Mammary epithelial cell (primary cell): ENCODE measurements at regions of chr17 and their contacts with region 1.

Region 1: GRCh38 chr17:65785109-65785508 is 223.7 kb upstream of the AXIN2 start:
- DNase-seq: peak; percentile 79
- H3K4me3 ChIP-seq: no peak overlapping the region
- H3K27ac ChIP-seq: peak overlapping the region; percentile 4
- H3K4me1 ChIP-seq: peaks cover 22% of the 10 kb centered on the region
- H3K27me3 ChIP-seq: no peaks in the 10 kb centered on the region
- CTCF ChIP-seq: no peak

Region 2: GRCh38 chr17:65561394-65562205 is 223.5 kb before region 1 on chr17 and contains the start of gene AXIN2:
- CTCF ChIA-PET with region 1: no interaction called
- dilution Hi-C with region 1: no loop called
- in situ Hi-C with region 1: no loop called
- intact Hi-C with region 1: loop called (anchors 5 kb)
- DNase-seq: peak; percentile 80
- H3K4me3 ChIP-seq: peak within 1 kb of the TSS; percentile 51 to 70 (median 54)
- H3K27ac ChIP-seq: no peak within 1 kb of the TSS
- H3K4me1 ChIP-seq: peaks cover 10% of the 10 kb centered on the region
- H3K27me3 ChIP-seq: peaks cover 21% of the 10 kb centered on the region
- CTCF ChIP-seq: peak; percentile 8 to 13
- total RNA-seq, gene AXIN2: 0.14 to 0.67 TPM

Region 3: GRCh38 chr17:65737451-65737850 is 47.7 kb before region 1 on chr17:
- CTCF ChIA-PET with region 1: no interaction called
- dilution Hi-C with region 1: no loop called
- in situ Hi-C with region 1: no loop called
- intact Hi-C with region 1: no loop called
- DNase-seq: no peak
- H3K4me3 ChIP-seq: no peak overlapping the region
- H3K27ac ChIP-seq: no peak overlapping the region
- H3K4me1 ChIP-seq: peaks cover 5% of the 10 kb centered on the region
- H3K27me3 ChIP-seq: no peaks in the 10 kb centered on the region
- CTCF ChIP-seq: no peak

Region 4: DNA sequence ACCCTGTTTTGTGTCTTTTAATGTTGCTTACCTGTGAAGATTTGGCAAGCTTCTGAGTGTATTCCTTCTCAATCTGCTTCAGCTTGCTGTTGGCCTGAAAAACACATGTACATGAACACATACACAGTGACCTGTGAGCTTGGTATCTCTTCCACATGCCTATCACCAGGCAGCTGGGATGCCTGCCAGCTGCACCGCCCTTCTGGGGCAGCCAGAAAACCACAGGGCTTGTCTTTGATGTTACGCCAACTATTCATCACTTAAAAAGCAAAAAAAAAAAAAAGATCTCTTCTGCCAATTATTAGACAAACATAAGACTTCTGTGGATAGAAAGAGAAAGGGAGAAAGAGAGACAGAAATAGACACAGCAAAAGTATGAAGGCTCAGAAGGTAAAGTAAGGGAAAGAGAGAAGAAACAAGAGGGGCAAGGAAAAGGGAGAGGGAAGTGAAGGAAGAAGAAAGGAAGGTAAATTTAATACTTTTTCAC is 34.4 kb before region 1 on chr17:
- CTCF ChIA-PET with region 1: no interaction called
- dilution Hi-C with region 1: no loop called
- in situ Hi-C with region 1: no loop called
- intact Hi-C with region 1: loop called (anchors 1 kb)
- DNase-seq: peak; percentile 94
- H3K4me3 ChIP-seq: no peak overlapping the region
- H3K27ac ChIP-seq: no peak overlapping the region
- H3K4me1 ChIP-seq: peaks cover 11% of the 10 kb centered on the region
- H3K27me3 ChIP-seq: no peaks in the 10 kb centered on the region
- CTCF ChIP-seq: no peak